Motor neuron (in vitro differentiated cells): ENCODE measurements at regions of chr5 and their contacts with region 1.

Region 1: DNA sequence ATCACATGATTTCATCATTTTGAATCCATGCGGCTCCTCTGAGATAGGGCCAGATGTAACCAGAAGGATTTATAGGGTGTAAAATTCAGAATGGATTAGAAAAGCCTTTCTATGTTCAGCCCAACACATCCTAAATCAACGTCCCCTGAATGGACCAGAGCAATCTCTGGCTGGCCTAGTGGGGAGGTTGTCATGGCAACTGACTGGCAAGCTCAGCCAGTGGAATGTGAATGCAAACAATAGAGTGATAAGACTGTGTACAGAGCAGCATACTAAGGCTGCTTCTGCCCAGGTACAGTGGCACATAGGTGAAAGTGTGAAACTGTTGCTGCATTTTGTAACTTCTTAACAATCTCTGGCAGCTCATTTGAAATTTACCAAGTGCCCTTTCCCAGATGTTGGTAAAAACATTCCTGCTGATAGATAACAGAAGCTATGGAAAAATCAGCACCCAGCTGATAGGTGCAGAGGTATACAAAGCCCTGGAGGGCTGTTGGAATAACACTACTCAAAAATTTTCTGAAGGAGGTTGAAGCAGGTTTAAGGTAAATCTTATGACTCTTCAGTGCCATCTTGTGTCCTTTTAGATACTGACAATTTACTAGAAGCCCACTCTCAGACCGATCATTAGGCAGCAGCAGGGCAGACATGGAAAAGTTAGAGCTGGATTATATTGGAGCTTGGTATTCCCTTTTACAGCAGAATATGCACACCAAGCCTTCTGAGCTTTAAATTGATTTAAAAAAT is 267.2 kb downstream of the RAB3C start:
- ATAC-seq: peak; percentile 75 to 99 (median 96)
- H3K4me3 ChIP-seq: peak overlapping the region in 1 of 5 donors; percentile 2
- H3K27ac ChIP-seq: peak overlapping the region; percentile 25 to 76
- H3K4me1 ChIP-seq: peaks cover 20 to 28% of the 10 kb centered on the region in 2 donors

Region 2: DNA sequence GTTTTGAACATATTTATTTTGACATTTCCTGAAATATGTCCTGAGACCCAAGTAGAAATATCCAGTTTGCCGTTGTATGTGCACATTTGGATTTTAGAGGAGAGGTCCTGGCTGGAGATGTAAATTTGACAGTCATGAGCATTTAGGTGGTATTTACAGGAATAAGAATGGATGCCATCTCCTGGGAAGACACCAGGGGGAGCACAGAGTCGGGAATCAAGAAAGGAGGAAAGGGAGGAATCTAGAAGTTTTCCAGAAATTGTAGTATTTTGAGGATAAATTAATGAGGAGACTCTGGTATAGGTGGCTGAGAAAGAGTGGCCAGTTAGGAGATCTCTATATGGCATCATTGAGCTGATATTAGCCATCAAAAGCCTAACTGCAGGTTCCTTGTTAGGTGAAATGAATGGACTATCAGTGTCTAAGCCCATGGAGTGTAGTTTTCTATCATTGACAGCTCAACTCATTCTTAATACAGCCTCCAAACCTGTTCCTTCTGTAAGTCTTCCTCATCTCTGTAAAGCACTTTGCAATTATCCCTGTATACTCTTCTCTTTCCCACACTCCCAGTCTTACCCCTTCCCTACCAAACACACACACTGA is 351.7 kb before region 1 on chr5:
- in situ Hi-C with region 1: loop called in 5 of 9 experiments (anchors 10 to 25 kb)
- ATAC-seq: peak in 3 of 8 experiments; percentile 34 to 52 (median 41)
- H3K4me3 ChIP-seq: no peak overlapping the region
- H3K27ac ChIP-seq: no peak overlapping the region
- H3K4me1 ChIP-seq: peaks cover 0 to 9% of the 10 kb centered on the region in 2 donors

Region 3: DNA sequence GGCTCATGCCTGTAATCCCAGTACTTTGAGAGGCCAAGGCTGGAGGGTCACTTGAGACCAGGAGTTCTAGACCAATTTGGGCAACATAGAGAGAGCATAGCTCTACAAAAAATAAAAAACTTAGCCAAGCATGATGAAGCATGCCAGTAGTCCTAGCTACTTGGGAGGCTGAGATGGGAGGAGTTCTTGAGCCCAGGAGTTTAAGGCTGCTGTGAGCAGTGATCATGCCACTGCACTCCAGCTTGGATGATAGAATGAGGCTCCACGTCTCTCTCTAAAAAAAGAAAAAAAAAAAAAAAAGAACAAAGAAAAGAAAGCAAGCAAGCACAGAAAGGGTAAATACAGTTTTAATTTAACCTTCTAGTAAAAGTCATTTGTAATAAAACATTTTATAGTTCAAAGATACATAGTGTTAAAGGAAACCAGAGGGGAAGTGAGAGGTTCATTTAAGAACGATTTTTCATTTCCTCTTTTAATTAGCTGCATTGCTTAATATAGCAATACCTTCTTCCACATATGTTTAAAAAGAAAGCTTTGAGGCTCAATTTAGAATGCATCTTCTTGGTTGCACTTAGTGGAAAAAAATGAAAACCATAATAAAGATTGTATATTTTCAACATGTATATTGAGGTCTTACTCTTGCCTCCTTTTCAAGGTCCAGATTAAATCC is 344.0 kb before region 1 on chr5:
- in situ Hi-C with region 1: loop called in 2 of 9 experiments (anchors 10 to 25 kb)
- ATAC-seq: no peak
- H3K4me3 ChIP-seq: no peak overlapping the region
- H3K27ac ChIP-seq: no peak overlapping the region
- H3K4me1 ChIP-seq: peaks cover 2 to 26% of the 10 kb centered on the region in 2 donors